ENCODE measurements at regions of chr1 and their contacts with region 1.

Region 1: DNA sequence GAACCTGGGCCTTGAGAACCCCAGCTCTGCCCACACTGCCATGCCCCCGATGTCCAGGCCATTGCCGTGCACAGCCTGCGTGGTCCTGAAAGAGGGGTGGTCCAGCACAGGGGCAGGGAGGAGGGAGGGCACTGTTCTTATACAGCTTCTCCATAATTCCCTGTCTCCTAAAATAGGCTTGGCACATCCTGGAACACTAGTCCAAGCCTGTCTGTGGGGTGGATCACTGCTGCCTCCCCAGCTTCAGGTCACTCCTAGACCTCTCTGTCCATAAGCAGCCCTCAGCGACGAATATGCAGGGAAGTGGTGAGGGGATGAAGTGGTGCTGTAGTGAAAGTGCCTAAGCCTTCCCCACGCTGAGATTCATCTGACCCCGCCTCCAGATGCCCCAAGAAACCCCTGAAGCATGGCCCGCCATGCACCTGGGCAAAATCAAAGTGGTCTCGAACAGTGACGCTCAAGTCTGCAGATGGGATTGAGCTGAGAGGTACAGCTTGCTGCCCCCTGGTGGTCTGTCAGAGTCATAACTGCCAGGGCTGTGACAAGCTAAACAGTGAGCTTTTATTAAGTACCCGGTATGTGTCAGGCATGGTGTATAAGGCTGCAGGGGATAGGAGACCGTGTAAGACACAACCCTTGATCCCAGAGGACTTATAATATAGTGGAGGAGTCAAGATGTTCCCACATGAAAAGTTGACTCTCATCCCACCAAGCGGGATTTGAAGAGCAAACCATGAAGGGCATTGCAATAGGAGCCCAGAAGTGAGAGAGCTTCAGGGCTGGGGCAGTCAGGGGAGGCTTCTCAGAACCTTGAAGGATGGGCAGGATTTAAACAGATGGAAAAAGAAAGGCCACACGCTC is 66.6 kb downstream of the FAM163A start:
- DNase-seq: peak; percentile 81
- H3K4me3 Mint-ChIP-seq: no peak overlapping the region
- H3K27ac Mint-ChIP-seq: no peak overlapping the region
- H3K4me1 Mint-ChIP-seq: peaks cover 10% of the 10 kb centered on the region
- H3K27me3 Mint-ChIP-seq: no peaks in the 10 kb centered on the region

Region 2: DNA sequence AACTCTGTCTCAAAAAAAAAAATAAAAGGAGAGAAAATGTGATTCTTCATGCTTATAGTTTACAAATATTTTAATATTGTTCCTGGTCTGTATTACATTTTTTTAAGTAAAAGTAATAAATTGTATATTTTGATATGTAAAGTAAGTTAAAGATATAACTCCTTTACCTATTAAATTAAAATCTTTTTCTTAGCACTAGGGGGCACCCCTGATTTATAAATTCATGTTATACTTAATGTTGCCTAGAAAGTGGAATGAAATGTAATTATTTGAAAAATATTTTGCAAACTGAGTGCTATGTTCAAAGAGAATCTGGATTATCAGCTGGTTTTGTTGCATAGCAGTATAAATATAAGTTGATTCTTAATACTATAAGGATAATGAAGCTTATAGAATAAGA is 1035.5 kb before region 1 on chr1:
- CTCF ChIA-PET with region 1: no interaction called
- intact Hi-C with region 1: loop called (anchors 10 kb)
- DNase-seq: no peak
- H3K4me3 Mint-ChIP-seq: no peak overlapping the region
- H3K27ac Mint-ChIP-seq: no peak overlapping the region
- H3K4me1 Mint-ChIP-seq: no peaks in the 10 kb centered on the region
- H3K27me3 Mint-ChIP-seq: no peaks in the 10 kb centered on the region

Region 3: GRCh38 chr1:179087665-179088225 is 722.0 kb before region 1 on chr1:
- CTCF ChIA-PET with region 1: no interaction called
- intact Hi-C with region 1: no loop called
- DNase-seq: no peak
- H3K4me3 Mint-ChIP-seq: no peak overlapping the region
- H3K27ac Mint-ChIP-seq: no peak overlapping the region
- H3K4me1 Mint-ChIP-seq: peaks cover 16% of the 10 kb centered on the region
- H3K27me3 Mint-ChIP-seq: no peaks in the 10 kb centered on the region

Region 4: DNA sequence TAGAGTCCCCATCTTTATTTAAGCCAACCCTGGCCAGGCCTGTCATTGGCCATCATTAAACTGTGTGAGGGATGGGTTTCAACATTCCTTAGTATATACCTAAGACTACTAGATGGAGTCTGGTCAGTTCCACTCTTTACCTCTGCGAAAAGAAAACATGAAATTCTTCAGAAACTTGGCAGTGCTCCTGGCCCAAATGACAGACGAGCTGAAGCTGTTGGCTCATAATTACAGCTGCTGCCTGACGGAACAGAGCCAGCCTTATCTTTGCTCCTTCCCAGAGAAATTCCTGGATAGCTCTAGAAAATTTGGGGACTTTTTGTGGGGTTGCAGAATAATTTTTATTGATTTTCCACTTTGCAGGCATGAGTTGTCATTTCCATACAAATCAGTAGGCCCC is 264.4 kb before region 1 on chr1:
- CTCF ChIA-PET with region 1: no interaction called
- intact Hi-C with region 1: no loop called
- DNase-seq: no peak
- H3K4me3 Mint-ChIP-seq: no peak overlapping the region
- H3K27ac Mint-ChIP-seq: no peak overlapping the region
- H3K4me1 Mint-ChIP-seq: no peaks in the 10 kb centered on the region
- H3K27me3 Mint-ChIP-seq: no peaks in the 10 kb centered on the region

Region 5: GRCh38 chr1:179599623-179600249 is 210.0 kb before region 1 on chr1:
- CTCF ChIA-PET with region 1: no interaction called
- intact Hi-C with region 1: loop called (anchors 5 kb)
- DNase-seq: peak; percentile 37
- H3K4me3 Mint-ChIP-seq: no peak overlapping the region
- H3K27ac Mint-ChIP-seq: no peak overlapping the region
- H3K4me1 Mint-ChIP-seq: no peaks in the 10 kb centered on the region
- H3K27me3 Mint-ChIP-seq: peaks cover 24% of the 10 kb centered on the region

Region 6: DNA sequence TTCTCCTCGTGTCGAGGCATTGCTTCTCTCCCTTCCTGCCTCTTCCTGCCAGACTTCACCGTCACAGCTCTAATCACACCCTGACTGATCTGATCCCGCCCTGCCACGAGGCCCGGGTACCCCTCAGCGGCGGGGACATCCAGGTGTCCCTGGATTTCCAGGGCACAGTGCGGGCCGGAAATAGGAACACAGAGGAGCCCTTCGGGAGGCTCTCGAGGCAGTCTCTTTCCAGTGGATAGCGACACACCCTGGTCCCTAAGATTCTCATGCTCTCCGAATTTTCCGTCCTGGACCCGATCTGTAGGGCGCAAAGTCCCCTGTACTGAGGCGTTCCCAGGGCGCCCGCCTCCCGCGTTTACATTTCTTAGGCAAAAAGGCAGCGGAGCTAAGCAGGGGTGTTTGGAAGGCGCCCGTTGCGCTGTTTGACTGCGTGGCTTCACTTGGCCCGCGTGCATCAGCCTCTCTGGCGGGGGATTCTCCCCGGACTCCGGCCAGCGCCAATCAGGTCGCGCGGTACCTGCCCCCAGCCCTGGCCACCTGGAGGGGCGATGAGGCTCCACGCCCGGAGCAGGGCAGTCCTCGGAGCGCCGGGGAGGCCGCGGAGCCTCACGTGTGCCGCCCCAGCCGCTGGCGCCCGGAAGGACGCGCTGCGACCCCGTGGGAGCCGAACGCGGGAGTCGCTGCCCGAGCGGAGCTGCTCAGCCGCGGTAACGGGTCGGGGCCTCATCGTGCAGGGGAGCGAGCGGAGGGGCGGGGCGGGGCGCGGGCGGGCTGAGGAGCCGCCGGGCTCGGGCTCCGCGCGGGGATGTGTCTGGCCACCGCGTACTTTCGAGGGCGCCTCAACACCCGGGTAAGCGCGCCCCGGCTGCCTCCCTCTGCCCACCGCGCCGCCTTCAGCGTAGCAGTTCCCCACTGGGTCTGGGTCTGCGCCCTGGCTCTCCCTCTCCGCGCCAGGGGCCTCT is 66.7 kb before region 1 on chr1 and contains the start of gene FAM163A:
- CTCF ChIA-PET with region 1: interaction called, 18 read pairs
- intact Hi-C with region 1: no loop called
- DNase-seq: peak; percentile 19
- H3K4me3 Mint-ChIP-seq: peak within 1 kb of the TSS; percentile 47
- H3K27ac Mint-ChIP-seq: no peak within 1 kb of the TSS
- H3K4me1 Mint-ChIP-seq: peaks cover 7% of the 10 kb centered on the region
- H3K27me3 Mint-ChIP-seq: peaks cover 49% of the 10 kb centered on the region
- total RNA-seq, gene FAM163A: 0.10 TPM in 1 of 2 experiments, not detected in the other

Region 7: DNA sequence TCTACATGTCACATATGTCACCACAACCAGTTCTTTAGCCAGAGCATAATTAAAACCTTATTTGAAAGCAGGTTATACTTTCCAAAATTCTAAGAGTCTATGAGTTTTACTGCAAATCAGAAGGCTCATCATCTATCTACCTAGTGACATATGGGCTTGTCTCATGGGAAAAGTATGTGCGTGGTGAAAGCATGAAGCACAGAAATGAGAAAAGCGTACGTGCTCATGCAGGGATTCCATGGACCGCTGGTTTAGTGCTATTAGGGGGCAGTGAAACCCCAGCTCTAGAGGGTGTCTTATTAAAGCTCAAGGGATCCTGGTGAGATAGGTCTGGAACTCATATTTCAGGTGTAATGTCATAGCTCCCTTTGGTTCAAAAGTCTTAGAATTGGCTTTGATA is 16.5 kb before region 1 on chr1:
- CTCF ChIA-PET with region 1: interaction called, 31 read pairs
- intact Hi-C with region 1: no loop called
- DNase-seq: no peak
- H3K4me3 Mint-ChIP-seq: no peak overlapping the region
- H3K27ac Mint-ChIP-seq: no peak overlapping the region
- H3K4me1 Mint-ChIP-seq: no peaks in the 10 kb centered on the region
- H3K27me3 Mint-ChIP-seq: peaks cover 2% of the 10 kb centered on the region

Region 8: DNA sequence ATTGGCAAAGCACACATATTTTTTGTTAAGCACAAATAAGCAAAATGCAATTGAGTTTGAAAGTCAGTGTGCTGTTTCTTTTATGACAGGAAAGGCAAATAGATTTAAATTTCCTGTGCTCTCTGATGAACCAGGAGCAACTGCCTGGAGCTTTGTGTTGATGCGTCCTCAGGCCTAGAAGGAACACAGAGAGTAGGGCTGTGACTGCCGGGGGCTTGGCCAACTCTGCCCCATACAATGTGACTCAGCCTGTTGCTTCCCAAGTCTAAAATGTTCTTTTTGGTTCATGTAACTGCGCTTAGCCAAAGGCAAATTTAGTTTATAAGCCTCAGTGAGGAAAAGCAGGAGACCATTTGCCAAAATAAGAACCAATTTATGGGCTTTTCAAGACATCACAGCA is 30.4 kb after region 1 on chr1:
- CTCF ChIA-PET with region 1: interaction called, 13 read pairs
- intact Hi-C with region 1: no loop called
- DNase-seq: no peak
- H3K4me3 Mint-ChIP-seq: no peak overlapping the region
- H3K27ac Mint-ChIP-seq: no peak overlapping the region
- H3K4me1 Mint-ChIP-seq: no peaks in the 10 kb centered on the region
- H3K27me3 Mint-ChIP-seq: no peaks in the 10 kb centered on the region

Measured in activated naive CD4-positive, alpha-beta T cell treated with anti-CD3 and anti-CD28 coated beads for 36 hours (primary cell).